ENCODE measurements at regions of chr5 and their contacts with region 1.

Region 1: GRCh38 chr5:141636413-141637122 is at the starts of genes HDAC3 and RELL2:
- DNase-seq: peak; percentile 91 to 96 (median 92)
- ATAC-seq: peak; percentile 89
- H3K4me3 ChIP-seq: peak within 1 kb of the TSS; percentile 91
- H3K27ac ChIP-seq: peak within 1 kb of the TSS; percentile 84
- H3K4me1 ChIP-seq: peaks cover 46 to 52% of the 10 kb centered on the region in 2 experiments
- H3K27me3 ChIP-seq: no peaks in the 10 kb centered on the region
- CTCF ChIP-seq: no peak
- EP300 ChIP-seq: no peak
- POLR2A ChIP-seq: peak; percentile 74
- RAD21 ChIP-seq: no peak
- polyA plus RNA-seq, gene HDAC3: 89.7 to 107 TPM
- polyA plus RNA-seq, gene RELL2: 0.06 to 0.76 TPM

Region 2: DNA sequence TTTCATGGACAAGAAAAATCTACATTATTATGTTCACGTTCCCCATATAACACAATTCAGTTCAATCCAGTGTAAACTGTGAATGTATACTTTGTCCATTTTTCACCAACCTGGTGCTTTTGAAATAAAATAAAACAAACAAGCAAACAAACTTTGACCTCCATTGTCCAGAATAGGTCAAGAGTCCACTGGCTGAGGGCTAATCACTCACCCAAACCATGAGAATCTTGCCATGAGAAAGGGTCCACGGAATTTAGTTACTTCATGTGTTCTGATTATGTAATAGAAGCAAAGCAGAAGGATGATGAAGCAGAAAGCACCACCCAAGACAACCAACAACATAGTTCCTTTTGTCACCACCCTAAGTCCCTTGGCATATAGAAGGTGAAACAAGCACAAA is 46.4 kb before region 1 on chr5:
- CTCF ChIA-PET with region 1: interaction called, 5 read pairs
- POLR2A ChIA-PET with region 1: interaction called, 4 read pairs
- in situ Hi-C with region 1: loop called (anchors 5 kb)
- intact Hi-C with region 1: loop called (anchors 5 kb)
- DNase-seq: no peak
- ATAC-seq: no peak
- H3K4me3 ChIP-seq: no peak overlapping the region
- H3K27ac ChIP-seq: no peak overlapping the region
- H3K4me1 ChIP-seq: peaks cover 0 to 2% of the 10 kb centered on the region in 2 experiments; a peak in 2 of 5 replicates
- H3K27me3 ChIP-seq: no peaks in the 10 kb centered on the region
- CTCF ChIP-seq: no peak
- EP300 ChIP-seq: no peak
- POLR2A ChIP-seq: no peak
- RAD21 ChIP-seq: no peak

Region 3: GRCh38 chr5:141650851-141651727 is 14.5 kb after region 1 on chr5 and contains the start of gene FCHSD1:
- CTCF ChIA-PET with region 1: no interaction called
- POLR2A ChIA-PET with region 1: interaction called, 12 read pairs
- in situ Hi-C with region 1: no loop called
- intact Hi-C with region 1: no loop called
- DNase-seq: peak; percentile 91 to 99 (median 98)
- ATAC-seq: peak; percentile 98
- H3K4me3 ChIP-seq: peak within 1 kb of the TSS; percentile 77
- H3K27ac ChIP-seq: peak within 1 kb of the TSS; percentile 62
- H3K4me1 ChIP-seq: peaks cover 9 to 27% of the 10 kb centered on the region in 2 experiments
- H3K27me3 ChIP-seq: no peaks in the 10 kb centered on the region
- CTCF ChIP-seq: no peak
- EP300 ChIP-seq: no peak
- POLR2A ChIP-seq: peak; percentile 75
- RAD21 ChIP-seq: no peak
- polyA plus RNA-seq, gene FCHSD1: 0.35 to 0.84 TPM

Region 4: GRCh38 chr5:141677415-141677814 is 40.8 kb after region 1 on chr5:
- CTCF ChIA-PET with region 1: no interaction called
- POLR2A ChIA-PET with region 1: no interaction called
- in situ Hi-C with region 1: no loop called
- intact Hi-C with region 1: no loop called
- DNase-seq: peak; percentile 35 to 53 (median 47)
- ATAC-seq: peak; percentile 34; the same call in 2 of the 3 replicates
- H3K4me3 ChIP-seq: no peak overlapping the region
- H3K27ac ChIP-seq: no peak overlapping the region
- H3K4me1 ChIP-seq: peaks cover 18 to 32% of the 10 kb centered on the region in 2 experiments
- H3K27me3 ChIP-seq: no peaks in the 10 kb centered on the region
- CTCF ChIP-seq: peak; percentile 14 to 48 (median 41); a peak in 4 of 6 replicates
- EP300 ChIP-seq: no peak
- POLR2A ChIP-seq: no peak
- RAD21 ChIP-seq: no peak